ENCODE measurements at regions of chr1 and their contacts with region 1.

Region 1: GRCh38 chr1:16971341-16972188 is 8.9 kb downstream of the MFAP2 start:
- DNase-seq: peak; percentile 46

Region 2: DNA sequence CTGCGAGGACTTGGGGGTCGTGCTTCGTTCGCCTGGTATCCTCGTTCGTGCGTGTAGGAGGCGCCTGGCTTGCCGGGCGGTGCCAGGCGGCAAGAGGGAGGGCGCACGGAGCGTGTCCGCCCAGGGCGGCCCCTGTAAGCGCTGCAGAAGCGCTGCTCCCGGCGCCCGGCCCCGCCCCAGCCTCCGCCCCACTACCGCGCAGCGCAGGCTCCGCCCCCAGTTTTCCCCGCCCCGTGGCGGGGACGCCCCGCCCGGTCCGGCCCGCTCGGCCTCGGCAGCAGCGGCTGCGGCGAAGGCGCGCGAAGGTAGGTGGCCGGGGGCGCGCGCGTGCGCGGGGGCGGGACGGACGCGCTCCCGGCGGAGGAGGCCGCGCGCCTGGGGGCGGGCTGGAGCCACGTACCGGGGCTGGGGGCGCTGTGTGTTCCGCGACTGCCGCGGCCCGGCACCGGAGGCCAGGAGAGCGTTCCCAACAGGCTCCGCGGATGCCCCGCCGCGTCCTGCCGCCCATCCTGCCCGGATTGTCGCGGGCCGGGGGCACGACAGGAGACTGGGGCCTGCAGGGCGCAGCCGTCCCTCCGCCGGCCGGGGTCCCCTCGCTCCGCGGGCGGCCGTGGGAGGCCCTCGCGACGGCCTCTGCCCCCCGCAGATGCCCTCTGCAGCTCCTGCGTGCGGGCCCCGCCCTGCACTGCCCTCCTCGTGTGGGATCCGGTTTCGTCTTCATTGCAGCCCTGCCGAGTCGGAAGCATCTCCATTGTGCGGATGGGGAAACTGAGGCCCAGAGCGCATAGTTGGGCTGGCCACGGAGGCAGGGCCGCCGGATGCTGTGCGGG is 57.5 kb before region 1 on chr1:
- in situ Hi-C with region 1: no loop called
- DNase-seq: peak; percentile 98

Region 3: DNA sequence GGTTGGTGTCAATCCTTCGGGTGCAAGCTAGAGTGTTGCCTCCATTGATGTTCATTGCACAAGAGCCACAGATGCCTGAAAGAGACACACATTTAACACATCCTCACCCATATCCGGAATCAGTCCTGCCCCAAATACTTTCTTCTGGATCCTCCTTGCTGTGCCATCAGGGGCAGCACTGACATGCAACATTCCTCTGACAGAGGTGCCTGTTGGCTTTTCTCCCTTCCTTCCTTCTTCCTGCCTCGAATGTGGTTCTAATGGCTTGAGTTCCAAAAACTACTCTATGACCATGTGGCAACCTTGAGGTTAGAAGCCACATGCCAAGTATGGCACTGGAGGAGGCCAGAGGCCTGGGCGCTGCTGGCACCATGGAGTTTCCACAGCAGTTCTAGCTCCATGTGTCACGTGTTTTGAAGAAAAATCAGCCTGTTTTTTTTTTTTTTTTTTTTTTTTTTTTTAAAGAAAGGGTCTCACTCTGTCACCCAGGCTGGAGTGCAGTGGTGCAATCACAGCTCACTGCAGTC is 57.2 kb after region 1 on chr1:
- in situ Hi-C with region 1: no loop called
- DNase-seq: no peak

Region 4: GRCh38 chr1:17043656-17044055 is 72.1 kb after region 1 on chr1:
- in situ Hi-C with region 1: loop called (anchors 5 kb)
- DNase-seq: no peak

Region 5: GRCh38 chr1:17274186-17275170 is 302.9 kb after region 1 on chr1:
- in situ Hi-C with region 1: no loop called
- DNase-seq: peak; percentile 4

Measured in G401 (cell line).